Activated CD4-positive, alpha-beta T cell treated with anti-CD3 and anti-CD28 coated beads for 36 hours (primary cell): ENCODE measurements at regions of chr19 and their contacts with region 1.

Region 1: DNA sequence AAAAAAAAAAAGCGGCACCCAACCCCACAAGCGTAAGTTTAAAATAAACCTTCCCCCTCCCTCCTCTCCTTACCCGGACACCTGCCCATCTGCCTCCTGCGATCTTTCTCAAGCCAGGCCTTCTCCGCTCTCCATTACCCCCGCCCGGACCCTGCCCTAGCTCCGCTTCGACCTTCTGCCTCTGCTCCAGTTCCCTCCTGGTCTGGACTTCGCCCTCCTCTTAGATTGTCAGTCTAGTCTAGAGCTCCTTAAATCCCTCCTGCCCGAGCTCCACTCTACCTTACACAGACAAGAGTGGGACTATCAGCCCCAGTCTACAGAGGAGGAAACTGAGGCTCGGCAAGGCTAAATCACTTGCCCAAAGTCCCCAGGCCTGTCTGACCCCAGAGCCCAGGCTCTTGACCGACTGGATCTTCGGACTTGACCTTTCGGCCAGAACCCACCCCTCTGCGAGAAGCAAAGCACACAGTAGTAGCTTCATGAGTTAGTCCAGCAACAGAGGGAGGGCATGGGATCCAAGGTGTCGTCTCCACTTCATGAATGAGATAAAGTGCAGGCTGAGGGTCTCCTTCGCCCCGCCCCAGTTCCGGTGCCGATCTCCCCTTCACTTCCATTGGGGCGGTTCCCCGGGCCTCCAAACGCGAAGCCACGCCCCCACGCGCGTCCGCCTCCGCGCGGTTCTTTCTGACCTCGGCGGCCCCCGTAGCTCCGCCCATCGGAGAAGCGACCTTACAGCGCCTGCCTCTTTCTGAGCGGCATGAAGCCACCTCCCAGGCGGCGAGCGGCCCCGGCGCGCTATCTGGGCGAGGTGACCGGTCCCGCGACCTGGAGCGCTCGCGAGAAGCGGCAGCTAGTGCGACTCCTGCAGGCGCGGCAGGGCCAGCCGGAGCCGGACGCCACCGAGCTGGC is at the start of gene SNAPC2:
- DNase-seq: peak; percentile 98
- ATAC-seq: peak; percentile 76
- H3K4me3 Mint-ChIP-seq: peak within 1 kb of the TSS; percentile 82
- H3K27ac Mint-ChIP-seq: peak within 1 kb of the TSS; percentile 87
- H3K4me1 Mint-ChIP-seq: peaks cover 32% of the 10 kb centered on the region
- H3K27me3 Mint-ChIP-seq: peaks cover 20% of the 10 kb centered on the region
- total RNA-seq, gene SNAPC2: 14.6 to 16.2 TPM

Region 2: DNA sequence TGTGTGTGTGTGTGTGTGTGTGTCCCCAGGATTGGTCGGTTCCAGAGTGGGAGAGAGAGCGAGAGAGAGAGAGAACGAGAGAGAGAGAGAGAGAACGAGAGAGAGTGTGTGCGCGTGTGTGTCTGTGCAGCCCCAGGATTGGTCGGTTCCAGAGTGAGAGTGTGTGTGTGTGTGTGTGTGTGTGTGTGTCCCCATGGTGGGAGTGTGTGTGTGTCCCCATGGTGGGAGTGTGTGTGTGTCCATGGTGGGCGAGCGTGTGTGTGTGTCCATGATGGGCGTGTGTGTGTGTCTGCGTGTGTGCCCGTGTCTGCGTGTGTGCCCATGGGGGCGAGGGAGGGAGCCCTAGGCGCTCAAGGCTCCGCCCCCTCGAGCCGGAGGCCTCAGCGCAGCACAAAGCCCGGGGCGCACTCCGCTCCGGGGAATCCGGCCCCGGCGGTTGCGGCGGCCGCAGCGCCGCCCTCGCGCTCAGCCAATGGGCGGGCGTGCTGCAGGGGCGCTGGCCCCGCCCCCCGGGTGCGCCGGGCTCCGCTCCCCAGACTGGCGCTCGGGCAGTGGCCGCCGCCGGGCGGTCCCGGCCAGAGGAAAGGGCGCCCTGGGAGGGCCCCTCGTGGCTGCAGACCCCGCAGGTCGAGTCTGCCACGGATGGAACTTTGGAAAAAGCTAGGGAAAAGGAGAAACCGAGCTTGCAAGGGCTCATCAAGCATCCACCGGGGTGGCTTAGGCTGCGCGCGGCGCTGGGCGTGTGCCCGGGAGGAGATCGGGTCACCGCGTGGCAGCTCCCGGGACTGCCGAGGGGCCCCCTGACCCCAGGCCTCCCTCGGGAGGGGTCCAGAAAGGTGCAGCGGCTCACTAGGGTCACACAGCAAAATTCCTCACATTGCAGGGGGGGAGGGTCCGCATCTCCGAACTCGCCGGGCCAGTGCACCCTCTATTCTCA is 721.8 kb before region 1 on chr19:
- CTCF ChIA-PET with region 1: no interaction called
- POLR2A ChIA-PET with region 1: no interaction called
- intact Hi-C with region 1: loop called in 1 of 2 experiments (anchors 1 kb)
- DNase-seq: peak; percentile 95
- ATAC-seq: peak; percentile 84
- H3K4me3 Mint-ChIP-seq: peak overlapping the region; percentile 77
- H3K27ac Mint-ChIP-seq: peak overlapping the region; percentile 88
- H3K4me1 Mint-ChIP-seq: peaks cover 16% of the 10 kb centered on the region
- H3K27me3 Mint-ChIP-seq: peaks cover 21% of the 10 kb centered on the region

Region 3: DNA sequence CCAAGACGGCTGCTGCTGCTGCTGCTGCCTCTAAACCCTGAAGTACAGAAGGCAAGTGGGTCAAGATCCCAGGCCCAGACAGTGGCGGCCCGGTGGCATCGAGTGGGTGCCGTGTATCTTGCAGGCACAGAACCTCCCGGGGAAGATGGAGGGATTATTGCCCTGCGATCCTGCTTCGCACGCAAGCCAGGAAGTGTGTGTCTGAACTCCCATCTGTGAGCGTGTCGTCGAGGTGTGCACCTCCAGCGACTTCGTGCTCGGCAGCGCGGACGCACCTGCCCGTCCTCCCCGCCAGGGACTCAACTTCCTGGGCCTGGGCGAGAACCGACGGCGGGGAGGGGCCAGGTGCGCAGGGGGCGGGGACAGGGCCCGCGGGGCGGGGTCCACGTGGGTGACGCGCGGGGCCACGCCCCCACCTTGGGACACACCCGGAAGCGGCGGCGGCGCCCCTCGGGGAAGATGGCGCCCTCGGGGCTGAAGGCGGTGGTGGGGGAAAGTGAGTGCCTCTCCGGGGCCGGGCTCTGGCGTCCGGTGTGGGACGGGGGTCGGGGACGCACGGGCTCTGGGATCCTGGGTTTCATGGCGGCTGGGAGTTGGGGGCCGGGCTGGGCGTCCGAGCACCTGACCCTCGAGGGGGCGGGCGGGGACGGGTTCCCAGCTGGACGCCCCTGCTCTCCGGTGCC is 283.0 kb before region 1 on chr19 and contains the start of gene STXBP2:
- CTCF ChIA-PET with region 1: no interaction called
- POLR2A ChIA-PET with region 1: no interaction called
- intact Hi-C with region 1: loop called in 1 of 2 experiments (anchors 1 kb)
- DNase-seq: peak; percentile 96
- ATAC-seq: peak; percentile 97
- H3K4me3 Mint-ChIP-seq: peak within 1 kb of the TSS; percentile 78
- H3K27ac Mint-ChIP-seq: peak within 1 kb of the TSS; percentile 86
- H3K4me1 Mint-ChIP-seq: peaks cover 22% of the 10 kb centered on the region
- H3K27me3 Mint-ChIP-seq: no peaks in the 10 kb centered on the region
- total RNA-seq, gene STXBP2: 75.2 to 83.0 TPM

Region 4: GRCh38 chr19:7861955-7862951 is 57.6 kb before region 1 on chr19:
- CTCF ChIA-PET with region 1: interaction called, 10 read pairs
- POLR2A ChIA-PET with region 1: no interaction called
- intact Hi-C with region 1: loop called in 1 of 2 experiments (anchors 1 kb)
- DNase-seq: peak; percentile 95
- ATAC-seq: peak; percentile 74
- H3K4me3 Mint-ChIP-seq: peak overlapping the region; percentile 40
- H3K27ac Mint-ChIP-seq: no peak overlapping the region
- H3K4me1 Mint-ChIP-seq: peaks cover 12% of the 10 kb centered on the region
- H3K27me3 Mint-ChIP-seq: peaks cover 13% of the 10 kb centered on the region

Region 5: GRCh38 chr19:7943444-7944176 is 23.7 kb after region 1 on chr19 and contains the start of gene TIMM44:
- CTCF ChIA-PET with region 1: interaction called, 24 read pairs
- POLR2A ChIA-PET with region 1: interaction called, 10 read pairs
- intact Hi-C with region 1: loop called (anchors 1 kb)
- DNase-seq: peak; percentile 99
- ATAC-seq: peak; percentile 99
- H3K4me3 Mint-ChIP-seq: peak within 1 kb of the TSS; percentile 90
- H3K27ac Mint-ChIP-seq: peak within 1 kb of the TSS; percentile 90
- H3K4me1 Mint-ChIP-seq: peaks cover 30% of the 10 kb centered on the region
- H3K27me3 Mint-ChIP-seq: no peaks in the 10 kb centered on the region
- total RNA-seq, gene TIMM44: 80.4 to 84.0 TPM

Region 6: GRCh38 chr19:8050274-8051096 is 130.6 kb after region 1 on chr19:
- CTCF ChIA-PET with region 1: no interaction called
- POLR2A ChIA-PET with region 1: no interaction called
- intact Hi-C with region 1: loop called in 1 of 2 experiments (anchors 1 kb)
- DNase-seq: peak; percentile 98
- ATAC-seq: peak; percentile 99
- H3K4me3 Mint-ChIP-seq: peak overlapping the region; percentile 36
- H3K27ac Mint-ChIP-seq: no peak overlapping the region
- H3K4me1 Mint-ChIP-seq: peaks cover 11% of the 10 kb centered on the region
- H3K27me3 Mint-ChIP-seq: peaks cover 4% of the 10 kb centered on the region

Region 7: GRCh38 chr19:8412783-8413628 is 493.1 kb after region 1 on chr19 and contains the start of gene MARCHF2:
- CTCF ChIA-PET with region 1: no interaction called
- POLR2A ChIA-PET with region 1: no interaction called
- intact Hi-C with region 1: loop called in 1 of 2 experiments (anchors 1 kb)
- DNase-seq: peak; percentile 97
- ATAC-seq: peak; percentile 100
- H3K4me3 Mint-ChIP-seq: peak within 1 kb of the TSS; percentile 50
- H3K27ac Mint-ChIP-seq: no peak within 1 kb of the TSS
- H3K4me1 Mint-ChIP-seq: peaks cover 5% of the 10 kb centered on the region
- H3K27me3 Mint-ChIP-seq: no peaks in the 10 kb centered on the region
- total RNA-seq, gene MARCHF2: 9.1 to 10.1 TPM